ENCODE measurements at regions of chr4 and their contacts with region 1.

Region 1: DNA sequence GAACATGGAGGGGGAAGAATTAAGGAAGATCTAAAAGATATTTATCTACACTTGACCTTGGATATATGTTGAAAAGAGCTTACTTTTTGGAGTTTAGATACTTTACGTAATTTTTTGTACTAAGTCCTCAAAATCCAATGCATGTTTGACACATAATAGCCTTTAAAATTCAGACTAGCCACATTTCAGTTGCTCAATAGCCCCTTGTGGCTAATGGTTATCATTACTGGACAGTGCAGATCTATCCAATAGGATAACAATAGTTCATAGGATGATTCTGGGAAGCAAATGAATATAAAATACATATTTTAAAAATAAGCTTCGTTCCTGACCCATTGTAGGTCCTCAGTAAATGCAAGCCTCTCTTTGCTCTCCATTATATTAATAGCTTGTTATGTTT is 13.8 kb downstream of the AP1AR start:
- DNase-seq: no peak
- H3K4me3 ChIP-seq: no peak overlapping the region
- CTCF ChIP-seq: peak; percentile 14

Region 2: GRCh38 chr4:112145326-112145819 is 100.0 kb before region 1 on chr4 and contains the start of gene FAM241A:
- in situ Hi-C with region 1: loop called (anchors 10 kb)
- DNase-seq: peak; percentile 41
- H3K4me3 ChIP-seq: peak within 1 kb of the TSS; percentile 67
- CTCF ChIP-seq: no peak

Region 3: GRCh38 chr4:112170451-112170993 is 74.9 kb before region 1 on chr4:
- in situ Hi-C with region 1: no loop called
- DNase-seq: no peak
- H3K4me3 ChIP-seq: no peak overlapping the region
- CTCF ChIP-seq: no peak

Region 4: DNA sequence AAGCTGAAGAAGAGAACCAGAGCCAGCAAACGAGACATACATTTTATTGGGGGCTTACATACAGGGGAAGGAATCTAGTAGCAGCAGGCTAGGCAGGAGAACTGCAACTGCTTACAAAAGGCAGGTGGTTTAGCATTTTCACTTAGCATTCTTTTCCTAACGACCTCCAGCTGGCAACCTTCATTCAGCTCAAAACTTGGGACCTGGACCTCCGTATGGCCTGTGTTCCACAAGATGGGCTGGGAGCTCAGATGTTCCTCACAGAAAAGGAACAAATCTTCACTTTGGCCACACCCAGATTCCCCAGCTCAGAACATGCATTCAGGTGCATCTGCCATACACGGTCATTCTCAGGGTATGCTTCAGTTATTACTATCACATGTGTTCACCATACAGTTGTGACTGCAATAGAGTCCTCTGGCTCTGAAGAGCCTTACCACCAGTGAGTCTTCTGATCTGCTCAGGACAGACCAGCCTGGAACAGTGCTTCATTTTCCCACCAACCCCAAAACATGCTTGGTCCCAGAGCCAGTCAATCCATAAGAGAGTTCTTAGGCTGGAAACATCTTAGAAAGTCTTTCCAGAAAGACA is 43.4 kb before region 1 on chr4:
- in situ Hi-C with region 1: no loop called
- DNase-seq: no peak
- H3K4me3 ChIP-seq: no peak overlapping the region
- CTCF ChIP-seq: no peak